PC-9 (cell line): ENCODE measurements at regions of chr6 and their contacts with region 1.

Region 1: GRCh38 chr6:18042536-18043145 is 55.2 kb upstream of the KIF13A start:
- DNase-seq: no peak
- H3K4me3 ChIP-seq: no peak overlapping the region
- H3K27ac ChIP-seq: no peak overlapping the region
- H3K4me1 ChIP-seq: peaks cover 25% of the 10 kb centered on the region
- H3K27me3 ChIP-seq: no peaks in the 10 kb centered on the region
- CTCF ChIP-seq: no peak

Region 2: DNA sequence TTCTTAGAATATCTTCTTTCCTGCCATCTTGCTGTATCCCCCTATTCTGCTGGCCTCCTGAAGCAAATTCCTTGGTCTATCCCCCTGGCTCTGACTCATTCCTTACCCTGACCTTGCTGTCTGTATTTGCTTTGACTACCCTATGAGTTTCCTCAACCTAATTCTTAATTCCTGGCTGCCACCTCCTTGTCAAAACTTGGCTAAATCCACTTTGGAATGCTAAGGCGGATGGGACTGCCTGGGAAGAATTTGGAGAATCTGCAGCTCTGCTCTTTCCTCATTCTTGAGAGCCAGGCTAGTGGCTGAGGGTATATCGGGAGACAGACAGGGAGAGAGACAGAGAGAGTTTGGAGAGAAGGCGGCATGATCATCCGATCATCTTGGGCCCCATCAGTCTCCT is 624.8 kb before region 1 on chr6:
- CTCF ChIA-PET with region 1: no interaction called
- POLR2A ChIA-PET with region 1: interaction called, 22 read pairs
- intact Hi-C with region 1: no loop called
- DNase-seq: peak; percentile 61 to 70
- H3K4me3 ChIP-seq: no peak overlapping the region
- H3K27ac ChIP-seq: peak overlapping the region; percentile 67
- H3K4me1 ChIP-seq: peaks cover 23% of the 10 kb centered on the region; the same call in 1 of the 2 replicates
- H3K27me3 ChIP-seq: no peaks in the 10 kb centered on the region
- CTCF ChIP-seq: no peak

Region 3: GRCh38 chr6:17987576-17988421 is 54.8 kb before region 1 on chr6 and contains the start of gene KIF13A:
- CTCF ChIA-PET with region 1: interaction called, 6 read pairs
- POLR2A ChIA-PET with region 1: interaction called, 9 read pairs
- intact Hi-C with region 1: loop called (anchors 5 kb)
- DNase-seq: peak; percentile 46 to 69
- H3K4me3 ChIP-seq: peak within 1 kb of the TSS; percentile 98
- H3K27ac ChIP-seq: peak within 1 kb of the TSS; percentile 45
- H3K4me1 ChIP-seq: peaks cover 59% of the 10 kb centered on the region
- H3K27me3 ChIP-seq: no peaks in the 10 kb centered on the region
- CTCF ChIP-seq: no peak
- total RNA-seq, gene KIF13A: 48.6 and 52.2 TPM in 2 replicates

Region 4: GRCh38 chr6:17998456-17998855 is 44.2 kb before region 1 on chr6:
- CTCF ChIA-PET with region 1: no interaction called
- POLR2A ChIA-PET with region 1: no interaction called
- intact Hi-C with region 1: no loop called
- DNase-seq: peak; percentile 12 to 59
- H3K4me3 ChIP-seq: no peak overlapping the region
- H3K27ac ChIP-seq: no peak overlapping the region
- H3K4me1 ChIP-seq: peaks cover 24% of the 10 kb centered on the region
- H3K27me3 ChIP-seq: no peaks in the 10 kb centered on the region
- CTCF ChIP-seq: no peak

Region 5: DNA sequence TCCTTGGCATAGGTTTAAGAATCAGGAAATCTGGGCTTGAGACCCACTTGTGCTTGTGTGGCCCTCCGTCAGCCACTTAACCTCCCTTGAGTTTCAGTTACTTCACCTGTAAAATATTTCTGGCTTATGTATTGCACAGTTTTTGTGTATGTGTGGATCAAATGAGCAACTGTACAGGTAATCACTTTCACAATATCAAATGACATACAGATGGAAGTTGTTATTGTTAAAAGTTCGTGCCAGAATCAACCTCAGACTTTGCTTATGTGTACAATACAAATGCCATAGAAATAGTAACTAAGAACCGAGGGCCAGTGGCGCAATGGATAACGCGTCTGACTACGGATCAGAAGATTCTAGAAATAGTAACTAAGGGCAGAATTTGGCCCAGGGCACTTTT is 10.4 kb after region 1 on chr6:
- CTCF ChIA-PET with region 1: no interaction called
- POLR2A ChIA-PET with region 1: no interaction called
- intact Hi-C with region 1: loop called (anchors 1 kb)
- DNase-seq: peak; percentile 32 to 93
- H3K4me3 ChIP-seq: peak overlapping the region; percentile 40; the same call in 1 of the 2 replicates
- H3K27ac ChIP-seq: peak overlapping the region; percentile 79
- H3K4me1 ChIP-seq: peaks cover 47% of the 10 kb centered on the region
- H3K27me3 ChIP-seq: no peaks in the 10 kb centered on the region
- CTCF ChIP-seq: no peak

Region 6: GRCh38 chr6:18138906-18139305 is 96.3 kb after region 1 on chr6:
- CTCF ChIA-PET with region 1: no interaction called
- POLR2A ChIA-PET with region 1: no interaction called
- intact Hi-C with region 1: no loop called
- DNase-seq: no peak
- H3K4me3 ChIP-seq: no peak overlapping the region
- H3K27ac ChIP-seq: no peak overlapping the region
- H3K4me1 ChIP-seq: no peaks in the 10 kb centered on the region
- H3K27me3 ChIP-seq: no peaks in the 10 kb centered on the region
- CTCF ChIP-seq: peak; percentile 25; the same call in 1 of the 2 replicates